ENCODE measurements at regions of chr21 and their contacts with region 1.

Region 1: DNA sequence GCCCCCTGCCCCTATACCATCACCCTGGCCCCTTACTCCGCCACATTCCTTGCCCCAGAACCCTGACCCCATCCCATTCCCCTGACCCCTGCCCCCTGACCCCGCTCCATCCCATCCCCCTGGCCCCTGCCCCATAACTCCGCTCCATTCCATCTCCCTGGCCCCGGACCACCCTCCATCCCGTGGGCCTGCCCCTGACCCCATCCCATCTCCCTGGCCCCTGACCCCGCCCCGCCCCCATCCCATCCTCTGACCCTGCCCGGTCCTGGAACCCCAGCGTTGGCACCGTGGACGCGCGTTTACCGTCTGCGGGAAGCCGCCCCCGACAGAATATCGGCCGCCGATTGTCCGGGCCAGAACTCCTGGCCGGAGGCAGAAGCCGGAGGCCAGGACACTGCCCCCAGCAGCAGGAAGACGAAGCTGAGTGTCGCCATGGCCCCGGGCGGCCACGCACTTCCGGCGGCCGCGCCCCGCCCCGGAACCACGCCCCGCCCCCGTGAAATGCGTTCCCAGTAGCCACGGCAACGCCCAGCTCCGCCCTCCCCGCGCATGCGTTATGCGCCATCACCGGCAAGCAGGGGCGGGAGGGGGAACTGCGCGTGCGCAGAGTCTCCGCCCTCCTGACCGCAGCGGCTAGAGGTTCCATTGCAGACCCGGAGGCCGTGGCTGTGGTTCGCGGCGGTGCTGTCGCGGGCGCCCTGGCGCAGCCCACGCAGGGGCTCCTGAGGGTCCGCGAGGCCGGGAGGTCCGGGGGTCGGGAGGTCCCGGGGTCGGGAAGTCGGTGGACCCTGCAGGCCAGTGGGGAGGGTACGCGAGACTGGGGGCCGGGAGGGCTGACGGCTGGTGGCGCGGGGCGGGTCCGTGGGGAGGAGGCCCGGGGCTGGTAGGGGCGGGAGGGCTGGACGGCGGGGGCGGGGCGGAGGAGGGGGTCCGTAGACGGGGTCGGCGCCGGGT is at the start of gene POFUT2:
- DNase-seq: peak; percentile 95
- H3K4me3 ChIP-seq: peak within 1 kb of the TSS; percentile 93
- H3K27ac ChIP-seq: no peak within 1 kb of the TSS
- H3K4me1 ChIP-seq: no peaks in the 10 kb centered on the region
- CTCF ChIP-seq: no peak
- total RNA-seq, gene POFUT2: 14.4 and 20.5 TPM in 2 replicates

Region 2: GRCh38 chr21:45152265-45152746 is 135.4 kb before region 1 on chr21:
- CTCF ChIA-PET with region 1: no interaction called
- POLR2A ChIA-PET with region 1: no interaction called
- intact Hi-C with region 1: loop called (anchors 1 kb)
- DNase-seq: peak; percentile 77
- H3K4me3 ChIP-seq: peak overlapping the region; percentile 58
- H3K27ac ChIP-seq: no peak overlapping the region
- H3K4me1 ChIP-seq: peaks cover 21% of the 10 kb centered on the region
- CTCF ChIP-seq: peak; percentile 75

Region 3: DNA sequence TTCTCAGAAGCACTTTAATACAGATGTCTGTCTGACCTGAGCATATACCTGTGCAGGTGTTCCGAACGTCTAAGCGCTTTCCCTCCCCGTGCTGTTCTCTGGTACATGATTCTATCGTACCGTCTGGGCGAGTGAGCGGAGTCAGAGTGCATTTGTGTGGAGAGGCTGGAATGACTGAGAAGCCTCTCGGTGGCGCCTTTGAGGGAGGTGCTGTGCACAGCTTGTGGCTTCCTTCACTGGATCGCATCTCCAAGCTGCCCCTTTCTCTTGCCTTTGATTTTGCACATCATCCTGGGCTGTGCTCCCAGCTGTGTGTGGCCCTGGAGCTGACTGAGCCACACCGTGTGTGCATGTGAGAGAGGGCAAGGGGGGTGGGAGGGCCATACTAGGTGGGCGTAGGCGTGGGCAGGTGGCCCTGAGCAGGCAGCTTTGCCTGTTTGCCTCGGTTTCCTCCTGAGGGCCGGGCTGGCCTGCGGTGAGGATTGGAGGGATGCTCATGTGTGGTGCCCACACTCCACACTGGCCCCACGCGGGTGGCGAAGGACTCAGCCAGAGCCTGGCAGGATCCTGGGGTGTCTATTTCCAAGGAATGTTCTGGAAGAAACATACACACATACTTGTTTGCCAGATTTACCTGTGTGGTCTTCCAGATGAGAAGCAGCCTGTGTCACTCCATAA is 108.0 kb before region 1 on chr21:
- CTCF ChIA-PET with region 1: no interaction called
- POLR2A ChIA-PET with region 1: no interaction called
- intact Hi-C with region 1: no loop called
- DNase-seq: no peak
- H3K4me3 ChIP-seq: no peak overlapping the region
- H3K27ac ChIP-seq: no peak overlapping the region
- H3K4me1 ChIP-seq: no peaks in the 10 kb centered on the region
- CTCF ChIP-seq: no peak

Region 4: GRCh38 chr21:45364468-45365185 is 76.9 kb after region 1 on chr21:
- CTCF ChIA-PET with region 1: interaction called, 13 read pairs
- POLR2A ChIA-PET with region 1: no interaction called
- intact Hi-C with region 1: no loop called
- DNase-seq: no peak
- H3K4me3 ChIP-seq: no peak overlapping the region
- H3K27ac ChIP-seq: no peak overlapping the region
- H3K4me1 ChIP-seq: no peaks in the 10 kb centered on the region
- CTCF ChIP-seq: no peak

Region 5: GRCh38 chr21:45439161-45439872 is 151.6 kb after region 1 on chr21:
- CTCF ChIA-PET with region 1: no interaction called
- POLR2A ChIA-PET with region 1: no interaction called
- intact Hi-C with region 1: loop called (anchors 1 kb)
- DNase-seq: peak; percentile 65
- H3K4me3 ChIP-seq: no peak overlapping the region
- H3K27ac ChIP-seq: no peak overlapping the region
- H3K4me1 ChIP-seq: no peaks in the 10 kb centered on the region
- CTCF ChIP-seq: peak; percentile 82